ENCODE measurements at regions of chr16 and their contacts with region 1.

Region 1: GRCh38 chr16:27179500-27180072 is 23.7 kb upstream of the KDM8 start:
- DNase-seq: peak; percentile 70 to 91 (median 84)
- ATAC-seq: peak; percentile 100
- H3K4me3 ChIP-seq: no peak overlapping the region
- H3K4me3 Mint-ChIP-seq: peak overlapping the region in 9 of 10 donors; percentile 5 to 56 (median 46)
- H3K27ac ChIP-seq: peak overlapping the region; percentile 19
- H3K27ac Mint-ChIP-seq: peak overlapping the region; percentile 51 to 95 (median 86)
- H3K4me1 ChIP-seq: peaks cover 17 to 34% of the 10 kb centered on the region in 2 donors
- H3K4me1 Mint-ChIP-seq: peaks cover 20 to 62% (median 48%) of the 10 kb centered on the region in 7 donors
- H3K27me3 ChIP-seq: no peaks in the 10 kb centered on the region
- H3K27me3 Mint-ChIP-seq: peaks cover 0 to 13% (median 0%) of the 10 kb centered on the region in 5 donors

Region 2: GRCh38 chr16:27058299-27058698 is 121.3 kb before region 1 on chr16:
- CTCF ChIA-PET with region 1: no interaction called
- POLR2A ChIA-PET with region 1: no interaction called
- intact Hi-C with region 1: no loop called
- DNase-seq: no peak
- ATAC-seq: no peak
- H3K4me3 ChIP-seq: no peak overlapping the region
- H3K4me3 Mint-ChIP-seq: no peak overlapping the region
- H3K27ac ChIP-seq: no peak overlapping the region
- H3K27ac Mint-ChIP-seq: no peak overlapping the region
- H3K4me1 ChIP-seq: no peaks in the 10 kb centered on the region
- H3K4me1 Mint-ChIP-seq: no peaks in the 10 kb centered on the region
- H3K27me3 ChIP-seq: no peaks in the 10 kb centered on the region
- H3K27me3 Mint-ChIP-seq: peaks cover 0 to 21% (median 12%) of the 10 kb centered on the region in 5 donors

Region 3: GRCh38 chr16:27154705-27155521 is 24.7 kb before region 1 on chr16:
- CTCF ChIA-PET with region 1: interaction called, 27 read pairs
- POLR2A ChIA-PET with region 1: interaction called, 3 read pairs
- intact Hi-C with region 1: loop called in 1 of 2 experiments (anchors 1 kb)
- DNase-seq: peak; percentile 26 to 74 (median 56)
- ATAC-seq: peak; percentile 90
- H3K4me3 ChIP-seq: no peak overlapping the region
- H3K4me3 Mint-ChIP-seq: peak overlapping the region in 2 of 10 donors; percentile 3 to 16
- H3K27ac ChIP-seq: no peak overlapping the region
- H3K27ac Mint-ChIP-seq: peak overlapping the region in 7 of 9 donors; percentile 18 to 91 (median 61)
- H3K4me1 ChIP-seq: peaks cover 0 to 8% of the 10 kb centered on the region in 2 donors
- H3K4me1 Mint-ChIP-seq: peaks cover 6 to 28% (median 15%) of the 10 kb centered on the region in 7 donors
- H3K27me3 ChIP-seq: no peaks in the 10 kb centered on the region
- H3K27me3 Mint-ChIP-seq: no peaks in the 10 kb centered on the region

Region 4: GRCh38 chr16:27195941-27196595 is 16.5 kb after region 1 on chr16:
- CTCF ChIA-PET with region 1: interaction called, 91 read pairs
- POLR2A ChIA-PET with region 1: interaction called, 59 read pairs
- intact Hi-C with region 1: loop called (anchors 1 kb)
- DNase-seq: peak in 7 of 9 donors; percentile 82 to 93 (median 90)
- ATAC-seq: peak; percentile 96
- H3K4me3 ChIP-seq: peak overlapping the region; percentile 41
- H3K4me3 Mint-ChIP-seq: peak overlapping the region; percentile 58 to 80 (median 72)
- H3K27ac ChIP-seq: peak overlapping the region; percentile 73
- H3K27ac Mint-ChIP-seq: peak overlapping the region; percentile 80 to 99 (median 95)
- H3K4me1 ChIP-seq: peaks cover 46 to 70% of the 10 kb centered on the region in 2 donors
- H3K4me1 Mint-ChIP-seq: peaks cover 52 to 83% (median 78%) of the 10 kb centered on the region in 7 donors
- H3K27me3 ChIP-seq: no peaks in the 10 kb centered on the region
- H3K27me3 Mint-ChIP-seq: no peaks in the 10 kb centered on the region

Region 5: GRCh38 chr16:27301236-27301861 is 121.8 kb after region 1 on chr16:
- CTCF ChIA-PET with region 1: no interaction called
- POLR2A ChIA-PET with region 1: no interaction called
- intact Hi-C with region 1: no loop called
- DNase-seq: no peak
- ATAC-seq: no peak
- H3K4me3 ChIP-seq: no peak overlapping the region
- H3K4me3 Mint-ChIP-seq: no peak overlapping the region
- H3K27ac ChIP-seq: no peak overlapping the region
- H3K27ac Mint-ChIP-seq: no peak overlapping the region
- H3K4me1 ChIP-seq: no peaks in the 10 kb centered on the region
- H3K4me1 Mint-ChIP-seq: peaks cover 14 to 48% (median 23%) of the 10 kb centered on the region in 7 donors
- H3K27me3 ChIP-seq: no peaks in the 10 kb centered on the region
- H3K27me3 Mint-ChIP-seq: no peaks in the 10 kb centered on the region

Region 6: DNA sequence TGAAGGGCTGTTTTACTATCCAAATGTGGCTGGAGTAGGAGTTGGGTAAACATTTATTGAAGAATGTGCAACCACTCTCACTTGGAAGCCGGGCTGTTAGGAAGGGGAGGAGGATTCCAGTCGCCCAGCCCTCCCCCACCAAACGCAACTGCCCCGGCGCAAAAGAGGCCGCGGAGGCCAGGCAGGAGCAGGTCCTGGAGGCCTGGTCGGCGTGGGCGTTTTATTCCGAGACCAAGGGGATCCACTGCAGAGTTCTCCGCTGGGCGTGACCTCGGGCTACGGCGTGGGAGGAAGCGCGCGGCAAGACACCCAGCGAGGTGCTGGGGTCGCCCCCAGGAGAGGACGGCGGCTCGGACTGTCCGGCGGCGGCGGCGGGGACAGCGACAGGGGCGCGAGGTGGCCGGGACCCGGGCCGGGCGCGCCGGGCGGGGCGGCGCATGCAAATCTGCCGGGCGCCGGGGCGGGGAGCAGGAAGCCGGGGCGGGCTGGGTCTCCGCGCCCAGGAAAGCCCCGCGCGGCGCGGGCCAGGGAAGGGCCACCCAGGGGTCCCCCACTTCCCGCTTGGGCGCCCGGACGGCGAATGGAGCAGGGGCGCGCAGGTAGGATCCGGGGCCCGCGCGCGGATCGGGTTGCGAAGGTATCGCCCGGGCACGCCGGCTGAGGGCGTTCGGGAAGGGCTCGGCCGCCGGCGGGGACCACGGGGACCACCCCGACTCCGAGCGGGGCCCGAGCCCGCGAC is 134.0 kb after region 1 on chr16 and contains the start of gene IL4R:
- CTCF ChIA-PET with region 1: interaction called, 6 read pairs
- POLR2A ChIA-PET with region 1: interaction called, 10 read pairs
- intact Hi-C with region 1: loop called (anchors 1 kb)
- DNase-seq: peak; percentile 55 to 84 (median 68)
- ATAC-seq: peak; percentile 72
- H3K4me3 ChIP-seq: peak within 1 kb of the TSS; percentile 73
- H3K4me3 Mint-ChIP-seq: peak within 1 kb of the TSS; percentile 87 to 99 (median 97)
- H3K27ac ChIP-seq: peak within 1 kb of the TSS; percentile 99
- H3K27ac Mint-ChIP-seq: peak within 1 kb of the TSS; percentile 92 to 99 (median 96)
- H3K4me1 ChIP-seq: peaks cover 17 to 33% of the 10 kb centered on the region in 2 donors
- H3K4me1 Mint-ChIP-seq: peaks cover 29 to 52% (median 42%) of the 10 kb centered on the region in 7 donors
- H3K27me3 ChIP-seq: no peaks in the 10 kb centered on the region
- H3K27me3 Mint-ChIP-seq: peaks cover 0 to 3% (median 0%) of the 10 kb centered on the region in 5 donors
- total RNA-seq, gene IL4R: 158 to 498 (median 198) TPM

Region 7: GRCh38 chr16:27355610-27356009 is 176.0 kb after region 1 on chr16:
- CTCF ChIA-PET with region 1: interaction called, 10 read pairs
- POLR2A ChIA-PET with region 1: no interaction called
- intact Hi-C with region 1: no loop called
- DNase-seq: peak in 6 of 9 donors; percentile 25 to 44 (median 37)
- ATAC-seq: peak; percentile 80
- H3K4me3 ChIP-seq: no peak overlapping the region
- H3K4me3 Mint-ChIP-seq: no peak overlapping the region
- H3K27ac ChIP-seq: peak overlapping the region; percentile 29
- H3K27ac Mint-ChIP-seq: peak overlapping the region; percentile 1 to 93 (median 77)
- H3K4me1 ChIP-seq: no peaks in the 10 kb centered on the region
- H3K4me1 Mint-ChIP-seq: peaks cover 13 to 37% (median 25%) of the 10 kb centered on the region in 7 donors
- H3K27me3 ChIP-seq: no peaks in the 10 kb centered on the region
- H3K27me3 Mint-ChIP-seq: no peaks in the 10 kb centered on the region